G401 (cell line): ENCODE measurements at regions of chr20 and their contacts with region 1.

Region 1: DNA sequence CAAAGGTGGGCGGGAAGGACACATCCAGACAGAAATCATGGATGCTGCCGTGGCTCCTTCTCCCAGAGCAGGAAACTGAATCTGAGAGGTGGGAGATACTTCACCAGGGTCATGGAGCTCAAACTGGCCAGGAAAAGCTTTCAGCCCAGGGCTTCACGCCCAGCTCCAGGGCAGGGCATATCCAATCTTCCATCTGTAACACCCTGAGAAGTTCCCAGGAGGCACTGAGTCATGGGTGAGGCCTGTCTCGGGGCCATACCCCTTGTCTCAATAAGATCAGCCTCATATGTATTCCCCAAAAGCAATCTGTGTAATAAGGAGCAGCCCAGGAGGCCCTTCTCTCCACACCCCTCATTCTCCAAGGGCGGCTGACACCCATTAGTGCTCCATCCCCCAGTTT is 439.2 kb upstream of the SULF2 start:
- DNase-seq: no peak

Region 2: GRCh38 chr20:48275685-48276342 is 51.3 kb after region 1 on chr20:
- in situ Hi-C with region 1: loop called (anchors 5 kb)
- DNase-seq: no peak